Endothelial cell of umbilical vein (primary cell): ENCODE measurements at regions of chr11 and their contacts with region 1.

Region 1: DNA sequence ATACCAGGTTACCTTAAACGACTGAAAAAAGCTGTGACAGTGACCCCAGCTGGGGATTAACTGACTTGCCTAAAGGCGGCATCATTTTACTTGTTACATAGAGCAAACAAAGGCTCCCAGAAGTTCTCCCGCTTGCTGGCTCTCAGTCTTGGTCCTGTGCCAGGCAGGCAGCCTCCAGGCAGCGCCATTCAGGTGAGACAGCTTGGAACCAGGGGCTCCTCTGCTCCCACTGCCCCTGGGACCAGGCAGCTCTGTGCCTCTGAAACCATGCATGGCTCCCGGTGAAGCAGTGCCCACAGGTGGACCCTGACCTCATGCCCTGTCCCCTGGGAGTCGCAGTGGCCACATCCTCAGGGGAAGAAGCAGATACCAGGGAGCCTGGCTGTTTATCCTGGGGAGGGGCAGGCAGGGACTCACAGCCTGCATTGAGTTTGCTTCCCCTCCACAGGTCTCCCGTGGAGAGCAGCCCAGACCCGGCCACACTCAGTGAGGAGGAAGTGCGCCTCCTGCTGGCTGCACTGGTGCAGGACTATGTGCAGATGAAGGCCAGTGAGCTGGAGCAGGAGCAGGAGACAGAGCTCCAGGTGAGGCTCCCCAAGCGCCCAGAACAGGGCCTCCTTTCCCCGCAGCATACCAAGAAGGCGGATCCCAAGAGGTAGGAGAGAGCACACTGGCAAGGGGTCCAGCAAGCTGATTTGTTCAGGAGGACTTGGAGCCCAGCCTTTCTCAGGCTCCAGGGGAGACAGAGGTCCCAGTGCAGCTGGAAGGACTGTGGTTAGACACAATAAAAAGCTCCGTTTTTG is 15.6 kb upstream of the CYP2R1 start:
- DNase-seq: peak; percentile 42
- H3K4me3 ChIP-seq: no peak overlapping the region
- H3K27ac ChIP-seq: no peak overlapping the region
- H3K4me1 ChIP-seq: peaks cover 16% of the 10 kb centered on the region
- H3K27me3 ChIP-seq: peaks cover 0 to 13% of the 10 kb centered on the region in 2 experiments
- CTCF ChIP-seq: peak; percentile 77 to 93
- POLR2A ChIP-seq: no peak

Region 2: GRCh38 chr11:14554959-14555358 is 352.7 kb before region 1 on chr11:
- CTCF ChIA-PET with region 1: interaction called, 12 read pairs
- POLR2A ChIA-PET with region 1: no interaction called
- dilution Hi-C with region 1: no loop called
- intact Hi-C with region 1: no loop called
- DNase-seq: no peak
- H3K4me3 ChIP-seq: no peak overlapping the region
- H3K27ac ChIP-seq: no peak overlapping the region
- H3K4me1 ChIP-seq: no peaks in the 10 kb centered on the region
- H3K27me3 ChIP-seq: peaks cover 4 to 15% of the 10 kb centered on the region in 2 experiments
- CTCF ChIP-seq: no peak
- POLR2A ChIP-seq: no peak

Region 3: GRCh38 chr11:14789879-14790484 is 117.6 kb before region 1 on chr11:
- CTCF ChIA-PET with region 1: interaction called, 833 read pairs
- POLR2A ChIA-PET with region 1: interaction called, 10 read pairs
- dilution Hi-C with region 1: no loop called
- intact Hi-C with region 1: loop called (anchors 1 kb)
- DNase-seq: peak; percentile 27
- H3K4me3 ChIP-seq: no peak overlapping the region
- H3K27ac ChIP-seq: no peak overlapping the region
- H3K4me1 ChIP-seq: peaks cover 21% of the 10 kb centered on the region
- H3K27me3 ChIP-seq: no peaks in the 10 kb centered on the region
- CTCF ChIP-seq: peak; percentile 20 to 26
- POLR2A ChIP-seq: no peak

Region 4: DNA sequence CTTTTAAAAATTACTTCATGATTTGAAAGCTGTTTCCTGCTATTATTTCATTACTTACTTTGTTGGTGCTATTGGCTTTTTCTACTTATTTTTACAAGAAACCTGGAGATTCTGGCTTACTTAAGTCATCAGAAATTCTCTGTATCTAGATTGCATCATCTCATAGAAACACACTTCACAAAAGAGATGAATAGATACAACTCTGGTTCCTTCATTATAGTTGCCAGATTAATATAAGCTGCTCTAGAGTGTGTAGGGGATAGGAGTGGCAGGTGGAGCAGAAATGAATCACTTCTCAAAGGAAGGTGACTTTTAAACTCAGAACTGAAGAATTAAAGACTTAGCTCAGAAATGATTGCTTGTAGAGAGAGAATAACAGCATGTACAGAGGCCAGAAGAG is 35.6 kb before region 1 on chr11:
- CTCF ChIA-PET with region 1: interaction called, 12 read pairs
- POLR2A ChIA-PET with region 1: no interaction called
- dilution Hi-C with region 1: no loop called
- intact Hi-C with region 1: no loop called
- DNase-seq: no peak
- H3K4me3 ChIP-seq: no peak overlapping the region
- H3K27ac ChIP-seq: no peak overlapping the region
- H3K4me1 ChIP-seq: peaks cover 7% of the 10 kb centered on the region
- H3K27me3 ChIP-seq: no peaks in the 10 kb centered on the region
- CTCF ChIP-seq: no peak
- POLR2A ChIP-seq: no peak

Region 5: DNA sequence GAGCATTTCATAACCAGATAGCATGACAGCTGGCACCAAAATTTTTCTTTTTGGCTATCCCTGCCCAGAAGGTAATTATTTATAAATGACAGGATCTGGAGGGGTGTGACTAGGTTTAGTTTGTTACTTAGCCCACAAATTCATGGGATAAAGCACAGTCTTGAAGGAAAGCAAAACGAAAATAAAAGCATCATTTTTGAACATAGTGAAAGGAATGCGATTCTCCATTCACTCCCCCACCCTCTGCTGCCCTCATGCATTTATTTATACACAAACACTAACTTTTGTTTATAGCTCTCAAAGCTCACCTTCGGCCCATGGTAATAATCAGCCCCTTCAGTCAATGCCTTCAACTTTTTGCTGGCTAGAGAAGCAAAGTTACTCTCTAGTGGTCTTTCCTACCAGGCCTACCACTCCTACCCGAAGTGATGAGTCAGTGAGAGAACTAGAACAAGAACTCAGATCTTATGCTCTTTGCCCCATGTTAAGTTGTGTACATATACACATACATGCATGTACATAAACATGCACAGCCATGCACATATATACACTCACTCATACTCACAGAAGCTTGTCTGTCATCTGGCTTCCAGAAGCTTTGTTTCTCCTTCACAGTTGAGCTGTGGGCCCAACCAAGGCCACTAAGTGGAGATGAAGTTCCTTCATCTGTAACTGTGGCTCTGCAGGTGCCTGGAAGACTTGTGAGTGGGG is 42.0 kb after region 1 on chr11:
- CTCF ChIA-PET with region 1: interaction called, 10 read pairs
- POLR2A ChIA-PET with region 1: no interaction called
- dilution Hi-C with region 1: no loop called
- intact Hi-C with region 1: no loop called
- DNase-seq: no peak
- H3K4me3 ChIP-seq: no peak overlapping the region
- H3K27ac ChIP-seq: no peak overlapping the region
- H3K4me1 ChIP-seq: no peaks in the 10 kb centered on the region
- H3K27me3 ChIP-seq: peaks cover 0 to 3% of the 10 kb centered on the region in 2 experiments
- CTCF ChIP-seq: no peak
- POLR2A ChIP-seq: no peak

Region 6: GRCh38 chr11:15027011-15027410 is 119.4 kb after region 1 on chr11:
- CTCF ChIA-PET with region 1: no interaction called
- POLR2A ChIA-PET with region 1: no interaction called
- dilution Hi-C with region 1: no loop called
- intact Hi-C with region 1: no loop called
- DNase-seq: no peak
- H3K4me3 ChIP-seq: no peak overlapping the region
- H3K27ac ChIP-seq: no peak overlapping the region
- H3K4me1 ChIP-seq: no peaks in the 10 kb centered on the region
- H3K27me3 ChIP-seq: no peaks in the 10 kb centered on the region
- CTCF ChIP-seq: no peak
- POLR2A ChIP-seq: no peak

Region 7: GRCh38 chr11:15101072-15101709 is 193.6 kb after region 1 on chr11:
- CTCF ChIA-PET with region 1: interaction called, 18 read pairs
- POLR2A ChIA-PET with region 1: no interaction called
- dilution Hi-C with region 1: no loop called
- intact Hi-C with region 1: no loop called
- DNase-seq: peak; percentile 63
- H3K4me3 ChIP-seq: no peak overlapping the region
- H3K27ac ChIP-seq: no peak overlapping the region
- H3K4me1 ChIP-seq: no peaks in the 10 kb centered on the region
- H3K27me3 ChIP-seq: peaks cover 4 to 5% of the 10 kb centered on the region in 2 experiments
- CTCF ChIP-seq: peak; percentile 78 to 90
- POLR2A ChIP-seq: no peak